ENCODE measurements at regions of chr18 and their contacts with region 1.

Region 1: DNA sequence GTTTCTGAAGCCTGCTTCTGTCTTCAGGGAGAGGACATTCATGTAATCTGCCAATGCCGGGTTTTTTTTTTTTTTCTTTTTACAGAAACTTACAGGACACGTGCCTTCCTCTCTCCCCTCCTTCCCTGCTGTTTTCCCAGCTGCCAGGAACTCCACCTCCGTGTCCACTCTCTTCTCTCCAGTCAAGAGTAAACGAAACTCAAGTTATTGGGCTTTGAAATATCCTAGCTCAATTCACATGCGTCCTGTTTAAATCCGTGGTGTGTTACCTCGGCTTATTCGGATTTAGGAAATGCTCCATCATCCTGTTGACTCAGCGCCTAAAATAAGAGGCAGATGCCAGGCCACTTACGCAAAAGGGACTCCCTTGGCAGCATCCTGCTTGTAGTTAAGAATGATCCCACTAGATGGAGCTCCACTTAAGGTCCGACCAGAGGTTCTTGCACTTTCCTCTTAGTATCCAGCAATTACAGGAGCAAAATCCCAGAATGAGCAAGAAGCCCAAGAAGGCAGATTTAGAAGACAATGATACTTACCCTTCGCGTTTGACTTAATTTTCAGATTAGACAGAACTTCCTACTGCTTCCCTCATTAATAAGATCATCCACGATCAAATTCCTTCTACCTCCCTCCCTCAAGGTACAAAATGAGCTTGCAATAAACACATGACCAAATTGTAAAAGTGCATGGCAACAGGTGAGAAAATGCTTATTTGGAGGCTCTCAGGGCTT is 97.2 kb upstream of the ZCCHC2 start:
- DNase-seq: peak; percentile 70
- H3K4me3 Mint-ChIP-seq: no peak overlapping the region
- H3K27ac Mint-ChIP-seq: no peak overlapping the region
- H3K4me1 Mint-ChIP-seq: peaks cover 30% of the 10 kb centered on the region
- H3K27me3 Mint-ChIP-seq: peaks cover 1% of the 10 kb centered on the region

Region 2: GRCh38 chr18:62186774-62187542 is 238.7 kb before region 1 on chr18 and contains the starts of genes PIGN and RELCH:
- CTCF ChIA-PET with region 1: interaction called, 4 read pairs
- POLR2A ChIA-PET with region 1: no interaction called
- intact Hi-C with region 1: loop called (anchors 1 kb)
- DNase-seq: peak; percentile 97
- H3K4me3 Mint-ChIP-seq: peak within 1 kb of the TSS; percentile 99
- H3K27ac Mint-ChIP-seq: peak within 1 kb of the TSS; percentile 93
- H3K4me1 Mint-ChIP-seq: peaks cover 51% of the 10 kb centered on the region
- H3K27me3 Mint-ChIP-seq: no peaks in the 10 kb centered on the region
- total RNA-seq, gene PIGN: 26.2 to 27.8 TPM
- total RNA-seq, gene RELCH: 16.1 to 17.7 TPM

Region 3: DNA sequence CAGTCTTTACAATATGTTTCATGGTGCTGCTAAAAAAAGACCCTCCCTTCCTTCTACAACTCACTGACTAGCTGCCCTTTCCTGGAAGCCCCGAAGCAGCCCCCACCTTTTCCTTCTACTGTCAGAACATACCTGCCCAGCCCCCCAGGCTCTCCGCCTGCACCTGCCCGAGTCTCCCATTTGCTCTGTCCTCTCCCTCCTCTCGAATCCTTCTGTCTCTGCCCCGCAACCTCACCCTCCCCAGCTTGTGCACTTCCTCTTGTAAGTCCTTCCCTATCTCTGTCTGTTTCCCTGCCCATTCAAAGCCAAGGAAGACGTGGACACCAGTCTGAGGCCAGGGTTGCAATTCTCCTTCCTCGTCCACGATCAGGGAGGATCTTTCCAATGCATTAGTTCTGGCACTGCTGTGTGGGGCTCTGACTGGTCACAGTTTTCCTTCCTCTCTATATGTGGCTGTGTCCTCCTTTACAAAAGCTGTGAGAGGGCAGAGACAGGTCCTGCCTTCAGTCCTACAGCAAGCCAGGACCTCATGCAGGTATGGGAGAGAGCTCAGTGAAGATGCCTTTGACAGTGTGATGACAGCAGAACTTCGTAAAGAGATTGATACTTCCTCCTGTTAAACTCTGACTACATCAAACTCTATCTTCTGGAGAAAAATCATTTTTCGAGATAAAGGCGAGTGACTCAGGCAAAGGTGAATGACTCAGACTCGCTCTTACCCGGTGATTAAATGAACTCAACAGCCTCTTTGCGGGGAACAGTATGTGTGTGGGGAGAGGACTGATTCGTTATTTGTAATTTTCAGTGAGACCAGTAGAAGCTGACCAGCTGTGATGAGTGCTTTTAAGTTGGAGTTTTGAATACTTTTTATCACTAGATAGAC is 86.3 kb before region 1 on chr18:
- CTCF ChIA-PET with region 1: interaction called, 4 read pairs
- POLR2A ChIA-PET with region 1: no interaction called
- intact Hi-C with region 1: loop called (anchors 1 kb)
- DNase-seq: peak; percentile 53
- H3K4me3 Mint-ChIP-seq: peak overlapping the region; percentile 31
- H3K27ac Mint-ChIP-seq: peak overlapping the region; percentile 73
- H3K4me1 Mint-ChIP-seq: peaks cover 29% of the 10 kb centered on the region
- H3K27me3 Mint-ChIP-seq: peaks cover 43% of the 10 kb centered on the region

Region 4: DNA sequence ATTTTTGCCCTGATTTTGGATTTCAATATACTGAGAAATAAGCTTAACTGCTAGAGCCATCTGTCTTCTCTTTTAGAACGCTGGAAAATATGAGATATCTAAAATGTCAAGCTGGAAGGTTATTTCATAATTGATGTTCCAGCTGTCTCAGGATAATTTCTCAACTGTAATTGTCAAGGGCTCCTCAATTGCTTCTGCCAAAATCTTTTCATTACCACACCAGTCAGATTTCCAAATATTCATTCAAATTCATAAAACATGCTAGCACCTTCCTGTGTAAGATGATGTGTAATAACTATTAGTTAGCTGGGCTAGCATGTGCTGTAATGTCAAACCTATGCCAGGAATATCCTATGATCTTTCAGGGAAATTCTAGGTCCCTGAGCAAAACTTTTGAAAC is 12.4 kb before region 1 on chr18:
- CTCF ChIA-PET with region 1: interaction called, 12 read pairs
- POLR2A ChIA-PET with region 1: no interaction called
- intact Hi-C with region 1: no loop called
- DNase-seq: no peak
- H3K4me3 Mint-ChIP-seq: no peak overlapping the region
- H3K27ac Mint-ChIP-seq: no peak overlapping the region
- H3K4me1 Mint-ChIP-seq: peaks cover 3% of the 10 kb centered on the region
- H3K27me3 Mint-ChIP-seq: peaks cover 21% of the 10 kb centered on the region

Region 5: GRCh38 chr18:62505669-62506494 is 80.3 kb after region 1 on chr18:
- CTCF ChIA-PET with region 1: interaction called, 12 read pairs
- POLR2A ChIA-PET with region 1: interaction called, 6 read pairs
- intact Hi-C with region 1: loop called (anchors 1 kb)
- DNase-seq: peak; percentile 66
- H3K4me3 Mint-ChIP-seq: peak overlapping the region; percentile 58
- H3K27ac Mint-ChIP-seq: peak overlapping the region; percentile 88
- H3K4me1 Mint-ChIP-seq: peaks cover 24% of the 10 kb centered on the region
- H3K27me3 Mint-ChIP-seq: no peaks in the 10 kb centered on the region

Region 6: GRCh38 chr18:62714671-62715435 is 289.2 kb after region 1 on chr18:
- CTCF ChIA-PET with region 1: no interaction called
- POLR2A ChIA-PET with region 1: no interaction called
- intact Hi-C with region 1: loop called (anchors 1 kb)
- DNase-seq: peak; percentile 97
- H3K4me3 Mint-ChIP-seq: peak overlapping the region; percentile 78
- H3K27ac Mint-ChIP-seq: peak overlapping the region; percentile 66
- H3K4me1 Mint-ChIP-seq: peaks cover 31% of the 10 kb centered on the region
- H3K27me3 Mint-ChIP-seq: peaks cover 2% of the 10 kb centered on the region

Measured in activated CD4-positive, alpha-beta memory T cell treated with anti-CD3 and anti-CD28 coated beads for 36 hours (primary cell).